Activated CD4-positive, alpha-beta T cell treated with anti-CD3 and anti-CD28 coated beads for 36 hours (primary cell): ENCODE measurements at regions of chr1 and their contacts with region 1.

Region 1: DNA sequence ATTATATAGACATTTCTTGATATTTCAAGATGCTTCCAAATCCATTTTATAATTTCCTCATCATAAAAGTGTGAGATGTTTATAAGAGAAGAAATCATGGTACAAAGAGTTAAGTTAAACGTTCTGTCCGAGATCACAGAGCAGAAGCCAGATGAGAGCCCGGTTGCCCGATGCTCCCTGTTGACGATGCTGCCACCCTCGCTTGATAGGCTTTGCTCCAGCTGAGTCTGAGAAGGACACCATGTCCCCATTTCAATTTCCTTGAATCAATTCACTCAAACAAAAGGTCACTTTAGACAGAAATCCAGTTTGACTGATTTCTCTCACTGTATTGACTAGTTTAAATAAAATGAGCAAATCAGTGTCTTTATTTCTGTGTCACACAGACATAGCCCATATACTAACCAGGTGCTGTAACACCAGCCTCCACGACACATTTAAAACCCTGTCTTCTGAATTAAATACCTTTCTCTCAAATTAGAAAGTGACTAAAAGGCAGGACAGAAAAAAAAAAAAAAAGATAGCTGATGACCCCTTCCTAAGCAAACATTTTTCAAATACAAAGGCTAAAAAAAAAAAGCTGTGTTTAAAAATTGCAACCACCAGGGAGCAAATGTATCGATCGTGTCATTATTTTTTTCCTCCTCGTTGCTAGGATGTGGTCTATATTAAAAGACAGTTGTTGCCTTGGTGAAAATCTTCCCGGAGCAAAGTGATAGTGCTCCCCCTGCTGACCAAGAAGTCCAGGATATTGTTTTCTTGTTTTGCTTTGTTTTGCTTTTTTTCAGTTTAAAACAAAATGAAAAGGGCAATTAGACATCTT is 35.2 kb downstream of the DNASE2B start:
- DNase-seq: peak; percentile 65
- ATAC-seq: peak; percentile 76
- H3K4me3 Mint-ChIP-seq: peak overlapping the region; percentile 48
- H3K27ac Mint-ChIP-seq: peak overlapping the region; percentile 32
- H3K4me1 Mint-ChIP-seq: peaks cover 18% of the 10 kb centered on the region
- H3K27me3 Mint-ChIP-seq: no peaks in the 10 kb centered on the region

Region 2: GRCh38 chr1:83905315-83905907 is 528.1 kb before region 1 on chr1:
- CTCF ChIA-PET with region 1: no interaction called
- POLR2A ChIA-PET with region 1: no interaction called
- intact Hi-C with region 1: loop called (anchors 5 kb)
- DNase-seq: no peak
- ATAC-seq: no peak
- H3K4me3 Mint-ChIP-seq: no peak overlapping the region
- H3K27ac Mint-ChIP-seq: no peak overlapping the region
- H3K4me1 Mint-ChIP-seq: no peaks in the 10 kb centered on the region
- H3K27me3 Mint-ChIP-seq: peaks cover 8% of the 10 kb centered on the region

Region 3: DNA sequence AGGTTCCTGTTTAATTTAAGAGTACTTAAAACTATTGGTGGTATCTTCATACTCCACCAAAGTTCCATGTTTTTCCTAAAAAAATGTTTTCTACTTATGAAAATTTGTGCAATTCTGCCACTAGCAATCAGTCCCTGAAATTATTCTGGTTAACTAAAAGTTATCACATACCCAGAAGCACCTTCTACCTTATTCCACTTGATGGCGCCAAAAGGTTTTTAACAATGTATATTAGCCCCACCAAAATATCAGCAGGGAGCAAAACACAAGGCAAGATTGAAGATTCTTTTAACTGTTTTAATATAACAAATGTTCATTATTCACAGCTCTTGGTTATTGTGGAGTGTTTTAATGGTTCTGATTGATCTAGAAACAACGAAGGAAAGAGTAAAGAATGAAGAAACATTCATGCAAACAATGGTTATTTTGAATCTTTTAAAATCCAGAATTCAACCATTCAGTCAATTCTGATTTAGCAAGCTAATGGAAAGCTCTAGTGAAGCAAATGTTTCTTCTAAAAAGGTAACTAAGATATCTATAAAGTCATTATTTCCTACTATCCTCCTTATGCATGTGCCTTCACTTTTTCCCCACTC is 501.7 kb before region 1 on chr1:
- CTCF ChIA-PET with region 1: interaction called, 6 read pairs
- POLR2A ChIA-PET with region 1: no interaction called
- intact Hi-C with region 1: loop called (anchors 1 to 5 kb)
- DNase-seq: peak; percentile 11
- ATAC-seq: peak; percentile 58
- H3K4me3 Mint-ChIP-seq: no peak overlapping the region
- H3K27ac Mint-ChIP-seq: no peak overlapping the region
- H3K4me1 Mint-ChIP-seq: no peaks in the 10 kb centered on the region
- H3K27me3 Mint-ChIP-seq: no peaks in the 10 kb centered on the region

Region 4: DNA sequence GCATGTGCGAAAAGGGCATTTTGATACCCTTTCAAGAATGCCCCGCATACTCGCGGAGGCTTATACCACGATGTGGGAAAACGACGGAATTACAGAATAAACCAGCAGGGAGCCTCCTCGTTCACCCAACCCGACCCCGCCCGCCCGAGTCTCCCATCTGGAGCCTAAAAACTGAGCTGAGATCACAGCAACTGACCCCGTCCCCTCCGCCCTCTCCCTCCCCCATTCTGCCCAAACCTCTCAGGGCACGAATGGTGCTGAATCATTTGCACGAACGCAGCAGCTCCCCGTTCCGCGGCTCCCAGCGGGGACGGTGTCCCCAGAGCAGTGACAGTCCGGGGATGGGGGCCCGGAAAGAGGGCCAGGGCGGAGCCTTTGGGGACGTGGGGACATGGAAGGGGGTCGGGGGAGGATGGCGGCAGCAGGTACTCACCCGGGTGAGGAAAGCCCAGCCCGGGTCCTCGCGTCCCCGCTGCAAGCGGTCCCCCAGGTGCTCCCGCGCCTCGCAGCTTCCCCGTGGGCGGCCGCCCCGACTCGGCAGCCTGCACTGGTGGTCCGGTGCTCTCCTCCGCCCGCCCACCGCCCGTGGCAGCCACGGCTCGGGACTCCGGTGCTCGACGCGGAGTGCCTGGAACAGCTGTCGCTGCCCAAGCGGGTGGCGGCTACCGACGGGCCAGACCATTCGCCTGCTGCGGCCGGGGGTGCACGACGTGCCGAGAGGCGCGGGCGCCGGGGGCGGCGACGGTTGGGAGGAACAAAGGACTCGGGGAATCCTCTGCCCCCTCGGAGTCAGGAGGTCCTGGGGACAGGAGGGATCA is 434.8 kb before region 1 on chr1 and contains the start of gene TTLL7:
- CTCF ChIA-PET with region 1: no interaction called
- POLR2A ChIA-PET with region 1: no interaction called
- intact Hi-C with region 1: loop called in 1 of 2 experiments (anchors 5 kb)
- DNase-seq: peak; percentile 79
- ATAC-seq: peak; percentile 79
- H3K4me3 Mint-ChIP-seq: peak within 1 kb of the TSS; percentile 77
- H3K27ac Mint-ChIP-seq: peak within 1 kb of the TSS; percentile 49
- H3K4me1 Mint-ChIP-seq: peaks cover 12% of the 10 kb centered on the region
- H3K27me3 Mint-ChIP-seq: peaks cover 62% of the 10 kb centered on the region
- total RNA-seq, gene TTLL7: 1.4 to 2.6 TPM

Region 5: DNA sequence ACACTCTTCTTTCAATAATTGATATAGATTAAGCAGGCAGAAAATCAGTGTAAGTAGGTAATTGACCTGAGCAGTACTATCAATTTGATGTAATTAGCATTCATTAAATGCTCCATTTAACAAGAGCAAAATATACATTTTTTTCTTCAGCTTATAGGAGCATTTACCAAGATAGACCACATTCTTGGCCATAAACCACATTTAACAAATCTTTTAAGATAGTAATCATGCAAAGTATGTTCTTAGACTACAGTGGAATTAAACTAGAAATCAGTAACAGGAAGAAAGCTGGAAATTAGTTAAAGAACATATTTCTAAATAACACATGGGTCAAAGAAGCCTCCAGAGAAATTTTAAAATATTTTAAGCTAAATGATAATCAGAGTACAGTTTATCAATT is 298.1 kb before region 1 on chr1:
- CTCF ChIA-PET with region 1: interaction called, 74 read pairs
- POLR2A ChIA-PET with region 1: no interaction called
- intact Hi-C with region 1: no loop called
- DNase-seq: no peak
- ATAC-seq: no peak
- H3K4me3 Mint-ChIP-seq: no peak overlapping the region
- H3K27ac Mint-ChIP-seq: no peak overlapping the region
- H3K4me1 Mint-ChIP-seq: peaks cover 11% of the 10 kb centered on the region
- H3K27me3 Mint-ChIP-seq: no peaks in the 10 kb centered on the region

Region 6: GRCh38 chr1:84298328-84298683 is 135.2 kb before region 1 on chr1:
- CTCF ChIA-PET with region 1: interaction called, 5 read pairs
- POLR2A ChIA-PET with region 1: no interaction called
- intact Hi-C with region 1: loop called (anchors 1 to 10 kb)
- DNase-seq: peak; percentile 71
- ATAC-seq: peak; percentile 79
- H3K4me3 Mint-ChIP-seq: peak overlapping the region; percentile 78
- H3K27ac Mint-ChIP-seq: peak overlapping the region; percentile 71
- H3K4me1 Mint-ChIP-seq: peaks cover 34% of the 10 kb centered on the region
- H3K27me3 Mint-ChIP-seq: peaks cover 6% of the 10 kb centered on the region